ENCODE measurements at regions of chr4 and their contacts with region 1.

Region 1: GRCh38 chr4:143882892-143883291 is 22.5 kb downstream of the GYPE start:
- DNase-seq: no peak
- H3K4me3 Mint-ChIP-seq: no peak overlapping the region
- H3K27ac Mint-ChIP-seq: no peak overlapping the region
- H3K4me1 Mint-ChIP-seq: no peaks in the 10 kb centered on the region
- H3K27me3 Mint-ChIP-seq: no peaks in the 10 kb centered on the region

Region 2: DNA sequence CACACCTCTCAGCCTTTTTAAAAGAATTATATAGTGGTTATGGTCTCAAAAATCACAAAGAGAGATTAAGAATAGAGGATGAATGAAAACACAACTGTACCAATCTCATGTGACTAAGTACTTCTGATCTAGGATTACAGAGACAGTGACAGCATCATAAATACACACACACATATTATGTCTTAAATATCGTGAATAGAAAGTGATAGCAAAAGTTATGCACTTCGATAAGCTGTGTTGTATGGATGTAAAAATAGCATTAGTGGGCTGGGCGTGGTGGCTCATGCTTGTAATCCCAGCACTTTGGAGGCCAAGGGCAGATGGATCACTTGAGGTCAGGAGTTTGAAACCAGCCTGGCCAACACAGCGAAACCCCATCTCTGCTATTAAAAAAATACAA is 232.6 kb after region 1 on chr4:
- intact Hi-C with region 1: loop called (anchors 10 kb)
- DNase-seq: no peak
- H3K4me3 Mint-ChIP-seq: no peak overlapping the region
- H3K27ac Mint-ChIP-seq: no peak overlapping the region
- H3K4me1 Mint-ChIP-seq: peaks cover 1% of the 10 kb centered on the region
- H3K27me3 Mint-ChIP-seq: no peaks in the 10 kb centered on the region